Calu3 (cell line): ENCODE measurements at regions of chr5 and their contacts with region 1.

Region 1: GRCh38 chr5:40904205-40904993 is 4.9 kb upstream of the C7 start:
- DNase-seq: peak; percentile 75
- H3K4me3 Mint-ChIP-seq: no peak overlapping the region
- H3K27ac Mint-ChIP-seq: no peak overlapping the region
- H3K4me1 Mint-ChIP-seq: peaks cover 7% of the 10 kb centered on the region
- H3K27me3 Mint-ChIP-seq: no peaks in the 10 kb centered on the region
- CTCF ChIP-seq: peak; percentile 88

Region 2: GRCh38 chr5:40605295-40605958 is 299.0 kb before region 1 on chr5:
- CTCF ChIA-PET with region 1: no interaction called
- intact Hi-C with region 1: no loop called
- DNase-seq: no peak
- H3K4me3 Mint-ChIP-seq: no peak overlapping the region
- H3K27ac Mint-ChIP-seq: no peak overlapping the region
- H3K4me1 Mint-ChIP-seq: no peaks in the 10 kb centered on the region
- H3K27me3 Mint-ChIP-seq: no peaks in the 10 kb centered on the region
- CTCF ChIP-seq: no peak

Region 3: DNA sequence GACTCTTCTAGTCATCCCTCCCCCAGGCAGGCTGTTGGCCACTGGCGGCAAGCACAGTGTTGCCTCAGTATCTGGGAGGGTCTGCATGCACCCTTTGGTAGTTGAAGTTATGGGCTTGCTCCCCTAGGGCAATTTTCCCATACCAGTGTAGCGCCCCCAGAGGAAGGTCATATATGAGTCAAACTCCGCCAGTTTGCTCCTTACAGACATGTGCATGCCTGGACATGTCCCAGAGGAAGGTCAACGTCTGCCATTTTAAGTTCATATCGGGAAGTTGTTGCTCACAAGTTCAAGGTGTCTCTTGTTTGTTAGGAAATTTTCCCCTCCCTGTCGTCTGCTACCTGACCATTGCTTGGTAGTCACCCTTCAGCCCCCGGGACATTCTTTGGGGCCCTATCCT is 218.1 kb after region 1 on chr5:
- CTCF ChIA-PET with region 1: no interaction called
- intact Hi-C with region 1: loop called (anchors 10 kb)
- DNase-seq: no peak
- H3K4me3 Mint-ChIP-seq: no peak overlapping the region
- H3K27ac Mint-ChIP-seq: no peak overlapping the region
- H3K4me1 Mint-ChIP-seq: no peaks in the 10 kb centered on the region
- H3K27me3 Mint-ChIP-seq: no peaks in the 10 kb centered on the region
- CTCF ChIP-seq: no peak

Region 4: GRCh38 chr5:41270423-41271251 is 366.2 kb after region 1 on chr5:
- CTCF ChIA-PET with region 1: interaction called, 3 read pairs
- intact Hi-C with region 1: loop called (anchors 5 kb)
- DNase-seq: peak; percentile 51
- H3K4me3 Mint-ChIP-seq: no peak overlapping the region
- H3K27ac Mint-ChIP-seq: no peak overlapping the region
- H3K4me1 Mint-ChIP-seq: peaks cover 8% of the 10 kb centered on the region
- H3K27me3 Mint-ChIP-seq: peaks cover 13% of the 10 kb centered on the region
- CTCF ChIP-seq: peak; percentile 52

Region 5: GRCh38 chr5:41346609-41347008 is 442.2 kb after region 1 on chr5:
- CTCF ChIA-PET with region 1: interaction called, 16 read pairs
- intact Hi-C with region 1: no loop called
- DNase-seq: no peak
- H3K4me3 Mint-ChIP-seq: no peak overlapping the region
- H3K27ac Mint-ChIP-seq: no peak overlapping the region
- H3K4me1 Mint-ChIP-seq: no peaks in the 10 kb centered on the region
- H3K27me3 Mint-ChIP-seq: peaks cover 29% of the 10 kb centered on the region
- CTCF ChIP-seq: no peak

Region 6: DNA sequence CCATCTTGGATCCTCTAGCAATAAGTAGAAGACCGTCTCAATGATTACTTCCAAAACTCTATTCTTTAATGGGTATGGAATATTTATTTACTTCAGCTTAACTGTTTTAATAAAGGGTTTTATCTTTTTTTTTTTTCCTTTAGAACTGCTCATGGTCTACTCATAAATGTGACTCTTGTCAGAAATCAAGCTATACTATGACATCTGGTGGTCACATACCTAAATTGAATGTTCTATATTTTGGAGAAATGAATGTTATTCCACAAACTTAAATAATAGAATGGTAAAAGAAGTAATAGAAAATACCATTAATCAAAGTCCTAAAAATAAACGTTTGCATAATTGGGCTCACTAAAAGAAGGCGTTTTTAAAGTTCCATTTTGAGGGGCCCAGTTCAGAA is 737.2 kb after region 1 on chr5:
- CTCF ChIA-PET with region 1: interaction called, 4 read pairs
- intact Hi-C with region 1: loop called (anchors 2 kb)
- DNase-seq: no peak
- H3K4me3 Mint-ChIP-seq: no peak overlapping the region
- H3K27ac Mint-ChIP-seq: no peak overlapping the region
- H3K4me1 Mint-ChIP-seq: no peaks in the 10 kb centered on the region
- H3K27me3 Mint-ChIP-seq: no peaks in the 10 kb centered on the region
- CTCF ChIP-seq: no peak